ENCODE measurements at regions of chr5 and their contacts with region 1.

Region 1: GRCh38 chr5:111278845-111279504 is 54.8 kb downstream of the CAMK4 start:
- DNase-seq: peak in 1 of 2 experiments; percentile 41
- H3K4me3 ChIP-seq: no peak overlapping the region
- H3K27ac ChIP-seq: no peak overlapping the region
- H3K4me1 ChIP-seq: no peaks in the 10 kb centered on the region
- H3K27me3 ChIP-seq: no peaks in the 10 kb centered on the region
- CTCF ChIP-seq: peak; percentile 71

Region 2: DNA sequence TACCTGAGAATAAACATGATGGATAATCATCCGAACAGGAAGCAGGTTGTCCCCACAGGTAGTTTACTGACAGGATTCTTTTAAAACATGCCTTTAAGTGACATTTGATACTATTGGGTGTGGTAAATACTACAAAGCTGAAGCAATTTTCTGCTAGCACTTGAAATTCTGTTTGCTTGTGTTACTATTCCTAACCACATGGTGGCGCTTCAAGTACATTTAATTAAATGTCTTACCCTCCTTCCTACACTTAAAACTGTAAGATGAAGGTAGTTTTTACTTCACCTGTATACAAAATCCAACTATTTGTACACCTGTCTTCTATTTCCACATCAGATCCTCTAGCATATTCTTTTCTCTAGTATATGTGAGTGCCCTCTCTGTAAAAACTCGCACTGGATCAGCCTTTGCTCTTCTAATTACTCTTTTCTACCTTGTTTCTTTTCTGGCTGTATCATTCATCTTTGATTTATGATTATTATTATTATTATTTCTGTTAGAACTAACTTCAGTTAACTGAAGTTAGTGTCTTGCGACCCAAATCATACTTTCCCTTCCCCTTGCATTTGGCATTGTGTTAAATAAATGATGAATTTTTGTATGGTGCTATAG is 521.8 kb before region 1 on chr5:
- CTCF ChIA-PET with region 1: no interaction called
- POLR2A ChIA-PET with region 1: no interaction called
- intact Hi-C with region 1: loop called (anchors 5 kb)
- DNase-seq: peak in 1 of 2 experiments; percentile 38
- H3K4me3 ChIP-seq: no peak overlapping the region
- H3K27ac ChIP-seq: no peak overlapping the region
- H3K4me1 ChIP-seq: no peaks in the 10 kb centered on the region
- H3K27me3 ChIP-seq: no peaks in the 10 kb centered on the region
- CTCF ChIP-seq: peak; percentile 86

Region 3: GRCh38 chr5:111158105-111158744 is 120.8 kb before region 1 on chr5:
- CTCF ChIA-PET with region 1: no interaction called
- POLR2A ChIA-PET with region 1: no interaction called
- intact Hi-C with region 1: loop called (anchors 2 kb)
- DNase-seq: peak; percentile 42 to 49
- H3K4me3 ChIP-seq: no peak overlapping the region
- H3K27ac ChIP-seq: no peak overlapping the region
- H3K4me1 ChIP-seq: no peaks in the 10 kb centered on the region
- H3K27me3 ChIP-seq: no peaks in the 10 kb centered on the region; the same call in none of the 2 replicates
- CTCF ChIP-seq: peak; percentile 98

Region 4: GRCh38 chr5:111550279-111551020 is 271.5 kb after region 1 on chr5:
- CTCF ChIA-PET with region 1: no interaction called
- POLR2A ChIA-PET with region 1: no interaction called
- intact Hi-C with region 1: no loop called
- DNase-seq: peak; percentile 38 to 61
- H3K4me3 ChIP-seq: no peak overlapping the region
- H3K27ac ChIP-seq: no peak overlapping the region
- H3K4me1 ChIP-seq: no peaks in the 10 kb centered on the region
- H3K27me3 ChIP-seq: no peaks in the 10 kb centered on the region
- CTCF ChIP-seq: peak; percentile 72